CD4-positive, alpha-beta T cell (primary cell): ENCODE measurements at regions of chr2 and their contacts with region 1.

Region 1: GRCh38 chr2:43226558-43226954 is at the start of gene ZFP36L2:
- DNase-seq: peak; percentile 89 to 98 (median 97)
- ATAC-seq: peak; percentile 59
- H3K4me3 ChIP-seq: peak within 1 kb of the TSS; percentile 97
- H3K4me3 Mint-ChIP-seq: peak within 1 kb of the TSS; percentile 93
- H3K27ac ChIP-seq: peak within 1 kb of the TSS; percentile 79 to 84
- H3K27ac Mint-ChIP-seq: peak within 1 kb of the TSS; percentile 98
- H3K4me1 ChIP-seq: peaks cover 31% of the 10 kb centered on the region
- H3K4me1 Mint-ChIP-seq: peaks cover 36% of the 10 kb centered on the region
- H3K27me3 ChIP-seq: no peaks in the 10 kb centered on the region
- H3K27me3 Mint-ChIP-seq: peaks cover 15% of the 10 kb centered on the region
- CTCF ChIP-seq: no peak
- total RNA-seq, gene ZFP36L2: 1,602 to 1,631 TPM

Region 2: GRCh38 chr2:42342061-42342794 is 884.3 kb before region 1 on chr2:
- CTCF ChIA-PET with region 1: no interaction called
- POLR2A ChIA-PET with region 1: no interaction called
- intact Hi-C with region 1: no loop called
- DNase-seq: no peak
- ATAC-seq: no peak
- H3K4me3 ChIP-seq: no peak overlapping the region
- H3K4me3 Mint-ChIP-seq: no peak overlapping the region
- H3K27ac ChIP-seq: no peak overlapping the region
- H3K27ac Mint-ChIP-seq: peak overlapping the region; percentile 50
- H3K4me1 ChIP-seq: peaks cover 16% of the 10 kb centered on the region
- H3K4me1 Mint-ChIP-seq: peaks cover 35% of the 10 kb centered on the region
- H3K27me3 ChIP-seq: no peaks in the 10 kb centered on the region
- H3K27me3 Mint-ChIP-seq: no peaks in the 10 kb centered on the region
- CTCF ChIP-seq: no peak

Region 3: GRCh38 chr2:42974721-42975717 is 251.5 kb before region 1 on chr2:
- CTCF ChIA-PET with region 1: interaction called, 11 read pairs
- POLR2A ChIA-PET with region 1: interaction called, 15 read pairs
- intact Hi-C with region 1: loop called (anchors 1 to 2 kb)
- DNase-seq: peak; percentile 13 to 71 (median 46)
- ATAC-seq: peak; percentile 46
- H3K4me3 ChIP-seq: no peak overlapping the region
- H3K4me3 Mint-ChIP-seq: no peak overlapping the region
- H3K27ac ChIP-seq: no peak overlapping the region
- H3K27ac Mint-ChIP-seq: no peak overlapping the region
- H3K4me1 ChIP-seq: peaks cover 9% of the 10 kb centered on the region
- H3K4me1 Mint-ChIP-seq: peaks cover 9% of the 10 kb centered on the region
- H3K27me3 ChIP-seq: no peaks in the 10 kb centered on the region
- H3K27me3 Mint-ChIP-seq: no peaks in the 10 kb centered on the region
- CTCF ChIP-seq: peak; percentile 64

Region 4: GRCh38 chr2:43149482-43150107 is 77.0 kb before region 1 on chr2:
- CTCF ChIA-PET with region 1: interaction called, 10 read pairs
- POLR2A ChIA-PET with region 1: interaction called, 1,478 read pairs
- intact Hi-C with region 1: no loop called
- DNase-seq: peak in 4 of 14 experiments; percentile 53 to 70 (median 57)
- ATAC-seq: peak; percentile 72
- H3K4me3 ChIP-seq: no peak overlapping the region
- H3K4me3 Mint-ChIP-seq: peak overlapping the region; percentile 8
- H3K27ac ChIP-seq: no peak overlapping the region
- H3K27ac Mint-ChIP-seq: peak overlapping the region; percentile 73
- H3K4me1 ChIP-seq: peaks cover 61% of the 10 kb centered on the region
- H3K4me1 Mint-ChIP-seq: peaks cover 72% of the 10 kb centered on the region
- H3K27me3 ChIP-seq: no peaks in the 10 kb centered on the region
- H3K27me3 Mint-ChIP-seq: no peaks in the 10 kb centered on the region
- CTCF ChIP-seq: no peak

Region 5: DNA sequence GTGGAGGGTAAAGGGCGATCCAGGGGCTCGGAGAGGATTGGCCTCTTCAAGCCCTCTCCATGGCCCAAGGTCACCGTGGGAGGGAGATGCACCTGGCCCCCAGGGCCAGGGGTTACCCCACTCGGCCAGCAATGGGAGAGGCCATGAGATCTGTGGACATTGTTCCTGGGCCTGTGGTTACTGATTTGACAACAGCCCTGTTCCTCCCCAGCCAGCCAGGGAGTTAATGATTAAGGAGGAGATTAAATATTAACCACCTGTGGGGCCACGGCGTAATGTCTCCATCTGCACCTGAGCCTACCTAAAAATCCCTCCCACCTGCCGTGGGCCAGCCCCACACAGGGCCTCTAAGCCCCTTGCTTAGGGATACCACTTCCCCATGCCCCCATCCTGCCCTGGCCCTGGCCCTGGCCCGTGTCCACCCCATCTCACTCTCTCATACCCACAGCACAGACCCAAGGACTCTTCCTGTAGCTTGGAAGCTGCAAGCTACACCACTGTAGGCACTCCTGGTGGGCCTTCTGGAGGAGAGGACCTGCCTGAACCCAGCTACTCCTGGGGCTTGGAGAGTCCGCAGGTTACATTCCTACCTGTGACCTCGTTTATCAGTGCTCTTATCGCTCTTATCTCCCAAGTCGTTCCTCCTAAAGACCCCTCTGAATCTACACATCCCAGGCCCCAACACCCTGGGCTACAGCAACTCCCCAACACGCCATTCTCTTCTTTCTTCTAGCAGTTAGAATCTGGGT is 32.3 kb before region 1 on chr2:
- CTCF ChIA-PET with region 1: interaction called, 12 read pairs
- POLR2A ChIA-PET with region 1: interaction called, 506 read pairs
- intact Hi-C with region 1: no loop called
- DNase-seq: peak in 1 of 14 experiments; percentile 35
- ATAC-seq: no peak
- H3K4me3 ChIP-seq: peak overlapping the region; percentile 57
- H3K4me3 Mint-ChIP-seq: peak overlapping the region; percentile 82
- H3K27ac ChIP-seq: peak overlapping the region; percentile 88 to 97
- H3K27ac Mint-ChIP-seq: peak overlapping the region; percentile 94
- H3K4me1 ChIP-seq: peaks cover 88% of the 10 kb centered on the region
- H3K4me1 Mint-ChIP-seq: peaks cover 55% of the 10 kb centered on the region
- H3K27me3 ChIP-seq: no peaks in the 10 kb centered on the region
- H3K27me3 Mint-ChIP-seq: no peaks in the 10 kb centered on the region
- CTCF ChIP-seq: no peak

Region 6: GRCh38 chr2:43312755-43313641 is 86.4 kb after region 1 on chr2:
- CTCF ChIA-PET with region 1: no interaction called
- POLR2A ChIA-PET with region 1: no interaction called
- intact Hi-C with region 1: no loop called
- DNase-seq: no peak
- ATAC-seq: no peak
- H3K4me3 ChIP-seq: no peak overlapping the region
- H3K4me3 Mint-ChIP-seq: no peak overlapping the region
- H3K27ac ChIP-seq: no peak overlapping the region
- H3K27ac Mint-ChIP-seq: no peak overlapping the region
- H3K4me1 ChIP-seq: no peaks in the 10 kb centered on the region
- H3K4me1 Mint-ChIP-seq: peaks cover 6% of the 10 kb centered on the region
- H3K27me3 ChIP-seq: no peaks in the 10 kb centered on the region
- H3K27me3 Mint-ChIP-seq: no peaks in the 10 kb centered on the region
- CTCF ChIP-seq: no peak

Region 7: GRCh38 chr2:43484323-43484930 is 257.9 kb after region 1 on chr2:
- CTCF ChIA-PET with region 1: interaction called, 11 read pairs
- POLR2A ChIA-PET with region 1: interaction called, 5 read pairs
- intact Hi-C with region 1: loop called (anchors 2 to 5 kb)
- DNase-seq: peak in 3 of 14 experiments; percentile 68 to 79 (median 76)
- ATAC-seq: no peak
- H3K4me3 ChIP-seq: no peak overlapping the region
- H3K4me3 Mint-ChIP-seq: no peak overlapping the region
- H3K27ac ChIP-seq: no peak overlapping the region
- H3K27ac Mint-ChIP-seq: no peak overlapping the region
- H3K4me1 ChIP-seq: no peaks in the 10 kb centered on the region
- H3K4me1 Mint-ChIP-seq: no peaks in the 10 kb centered on the region
- H3K27me3 ChIP-seq: no peaks in the 10 kb centered on the region
- H3K27me3 Mint-ChIP-seq: no peaks in the 10 kb centered on the region
- CTCF ChIP-seq: peak; percentile 75